Sigmoid colon (tissue), 7 donors: ENCODE measurements at regions of chr1 and their contacts with region 1.

Region 1: DNA sequence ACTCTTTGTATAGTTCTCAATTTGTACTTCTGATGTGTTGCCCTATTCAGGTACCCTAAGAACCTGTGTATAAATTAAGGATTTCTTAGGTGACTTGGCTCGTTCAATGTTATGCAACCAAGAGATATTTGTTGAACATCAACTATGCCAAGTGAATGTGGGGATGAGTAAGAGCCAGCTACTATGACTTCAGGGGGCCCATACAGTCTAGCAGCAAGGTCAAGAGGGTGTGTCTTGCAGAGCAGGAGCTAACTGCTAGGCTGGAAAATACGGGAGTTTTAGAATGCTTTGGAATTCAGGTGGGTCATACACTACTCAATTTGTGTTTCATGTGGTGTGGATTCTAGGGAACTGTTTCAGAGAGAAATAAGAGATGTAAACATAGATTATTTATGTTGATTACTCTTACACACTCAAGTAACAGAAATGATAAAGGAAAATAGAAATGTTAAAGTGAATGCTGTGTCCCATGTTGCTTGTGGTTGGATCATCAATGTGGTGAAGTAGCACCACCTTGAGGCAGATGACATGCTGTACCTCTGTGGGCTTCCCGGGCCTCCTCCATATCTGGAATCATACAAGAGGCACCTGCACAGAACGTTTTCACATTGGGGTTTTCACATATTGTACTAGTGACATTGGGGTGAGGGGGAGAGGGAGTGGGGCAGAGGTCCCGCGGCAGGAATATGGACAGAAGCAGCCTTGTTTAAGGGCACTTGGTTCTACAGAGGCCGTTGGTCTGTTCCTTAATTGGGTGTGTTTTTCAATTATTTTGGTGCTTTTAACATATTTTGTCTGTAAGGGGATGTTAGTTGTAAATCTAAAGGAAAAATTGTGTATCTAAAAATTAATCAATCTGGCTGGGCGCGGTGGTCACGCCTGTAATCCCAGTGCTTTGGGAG is 12.4 kb downstream of the ARPC5 start:
- DNase-seq: no peak
- H3K4me3 ChIP-seq: no peak overlapping the region
- H3K27ac ChIP-seq: peak overlapping the region; percentile 43 to 54 (median 50)
- H3K4me1 ChIP-seq: peaks cover 0 to 50% (median 36%) of the 10 kb centered on the region in 4 donors
- H3K27me3 ChIP-seq: no peaks in the 10 kb centered on the region
- CTCF ChIP-seq: peak in 3 of 4 experiments; percentile 34 to 59 (median 51)
- EP300 ChIP-seq: no peak
- POLR2A ChIP-seq: no peak

Region 2: DNA sequence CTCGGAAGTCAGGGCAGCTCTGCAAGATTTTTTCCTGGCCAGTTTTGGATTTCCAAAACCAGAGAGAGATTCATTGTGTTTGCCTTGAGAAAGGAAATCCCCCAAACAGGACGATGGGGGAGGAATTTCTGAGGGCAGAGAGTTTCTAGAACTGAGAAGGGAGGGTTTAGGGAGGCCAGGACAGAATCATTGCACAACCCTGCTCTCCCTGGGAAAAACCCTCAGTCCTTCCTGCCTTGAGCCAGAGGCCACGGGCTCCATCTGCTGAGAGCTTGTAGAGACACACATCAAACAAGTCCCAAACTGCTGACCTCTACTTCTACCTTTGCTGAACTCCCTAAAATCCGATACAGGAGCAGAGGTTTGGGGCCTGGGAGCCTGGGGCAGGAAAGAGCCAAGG is 304.7 kb before region 1 on chr1:
- intact Hi-C with region 1: loop called (anchors 10 kb)
- DNase-seq: peak; percentile 95
- H3K4me3 ChIP-seq: no peak overlapping the region
- H3K27ac ChIP-seq: peak overlapping the region; percentile 75 to 80 (median 78)
- H3K4me1 ChIP-seq: peaks cover 0 to 57% (median 35%) of the 10 kb centered on the region in 4 donors
- H3K27me3 ChIP-seq: no peaks in the 10 kb centered on the region
- CTCF ChIP-seq: peak; percentile 38 to 68 (median 60)
- EP300 ChIP-seq: no peak
- POLR2A ChIP-seq: no peak

Region 3: DNA sequence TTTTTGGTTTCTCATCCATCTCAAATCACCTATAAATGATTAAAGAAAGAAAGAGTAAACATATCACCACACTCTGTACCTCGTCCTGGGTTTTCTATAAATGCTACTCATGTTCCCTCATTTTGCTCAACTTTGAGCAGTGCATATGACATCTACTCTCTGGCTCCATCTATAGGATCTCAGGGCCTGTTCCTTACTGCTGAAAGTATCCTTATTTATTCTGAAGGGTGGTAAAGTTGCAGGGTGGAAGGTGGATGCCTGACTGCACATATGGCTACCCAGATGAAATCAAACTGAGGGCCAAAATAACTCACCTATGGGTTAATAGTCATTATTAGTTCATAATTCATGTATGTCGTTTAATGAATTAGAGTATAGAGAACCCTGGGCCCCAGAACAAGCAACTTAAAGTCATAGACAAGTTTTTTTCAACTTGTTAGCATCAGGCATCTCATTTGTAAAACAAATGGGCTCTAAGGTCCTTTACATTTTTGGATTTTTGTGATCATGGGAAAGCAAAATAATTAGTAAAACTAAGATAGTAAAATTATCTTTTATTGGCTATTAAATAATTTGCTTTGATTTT is 79.4 kb before region 1 on chr1:
- intact Hi-C with region 1: loop called (anchors 10 kb)
- DNase-seq: no peak
- H3K4me3 ChIP-seq: no peak overlapping the region
- H3K27ac ChIP-seq: no peak overlapping the region
- H3K4me1 ChIP-seq: peaks cover 0 to 8% (median 3%) of the 10 kb centered on the region in 4 donors
- H3K27me3 ChIP-seq: no peaks in the 10 kb centered on the region
- CTCF ChIP-seq: peak; percentile 20 to 68 (median 59)
- EP300 ChIP-seq: no peak
- POLR2A ChIP-seq: no peak